ENCODE measurements at regions of chr4 and their contacts with region 1.

Region 1: GRCh38 chr4:138348055-138348454 is 105.9 kb upstream of the SLC7A11 start:
- DNase-seq: peak; percentile 47
- H3K4me3 Mint-ChIP-seq: peak overlapping the region; percentile 41
- H3K27ac Mint-ChIP-seq: peak overlapping the region; percentile 96
- H3K4me1 Mint-ChIP-seq: peaks cover 43% of the 10 kb centered on the region
- H3K27me3 Mint-ChIP-seq: no peaks in the 10 kb centered on the region
- CTCF ChIP-seq: no peak

Region 2: DNA sequence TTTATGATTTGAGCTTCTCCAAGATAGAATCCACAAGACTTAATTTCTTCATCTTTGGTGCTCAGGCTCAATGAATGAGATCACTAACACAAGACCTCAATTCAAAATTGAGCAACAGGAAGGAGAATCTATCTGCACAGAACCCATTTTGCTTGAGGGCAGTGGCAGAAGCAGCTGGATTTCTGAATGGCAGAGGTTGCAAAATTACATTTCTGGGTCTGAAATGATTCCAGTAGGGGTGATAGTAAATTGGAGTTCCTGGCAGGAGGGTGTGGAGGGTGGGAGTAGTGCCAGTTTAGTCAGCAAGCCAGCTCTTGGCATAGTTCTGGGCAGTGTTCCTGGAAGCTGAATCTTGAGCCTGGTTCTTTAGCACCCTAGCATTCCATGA is 387.0 kb before region 1 on chr4:
- CTCF ChIA-PET with region 1: no interaction called
- intact Hi-C with region 1: no loop called
- DNase-seq: no peak
- H3K4me3 Mint-ChIP-seq: no peak overlapping the region
- H3K27ac Mint-ChIP-seq: no peak overlapping the region
- H3K4me1 Mint-ChIP-seq: no peaks in the 10 kb centered on the region
- H3K27me3 Mint-ChIP-seq: no peaks in the 10 kb centered on the region
- CTCF ChIP-seq: no peak

Region 3: GRCh38 chr4:138199568-138200235 is 148.4 kb before region 1 on chr4:
- CTCF ChIA-PET with region 1: no interaction called
- intact Hi-C with region 1: loop called (anchors 5 kb)
- DNase-seq: peak; percentile 67
- H3K4me3 Mint-ChIP-seq: peak overlapping the region; percentile 57
- H3K27ac Mint-ChIP-seq: peak overlapping the region; percentile 98
- H3K4me1 Mint-ChIP-seq: peaks cover 49% of the 10 kb centered on the region
- H3K27me3 Mint-ChIP-seq: no peaks in the 10 kb centered on the region
- CTCF ChIP-seq: no peak

Region 4: DNA sequence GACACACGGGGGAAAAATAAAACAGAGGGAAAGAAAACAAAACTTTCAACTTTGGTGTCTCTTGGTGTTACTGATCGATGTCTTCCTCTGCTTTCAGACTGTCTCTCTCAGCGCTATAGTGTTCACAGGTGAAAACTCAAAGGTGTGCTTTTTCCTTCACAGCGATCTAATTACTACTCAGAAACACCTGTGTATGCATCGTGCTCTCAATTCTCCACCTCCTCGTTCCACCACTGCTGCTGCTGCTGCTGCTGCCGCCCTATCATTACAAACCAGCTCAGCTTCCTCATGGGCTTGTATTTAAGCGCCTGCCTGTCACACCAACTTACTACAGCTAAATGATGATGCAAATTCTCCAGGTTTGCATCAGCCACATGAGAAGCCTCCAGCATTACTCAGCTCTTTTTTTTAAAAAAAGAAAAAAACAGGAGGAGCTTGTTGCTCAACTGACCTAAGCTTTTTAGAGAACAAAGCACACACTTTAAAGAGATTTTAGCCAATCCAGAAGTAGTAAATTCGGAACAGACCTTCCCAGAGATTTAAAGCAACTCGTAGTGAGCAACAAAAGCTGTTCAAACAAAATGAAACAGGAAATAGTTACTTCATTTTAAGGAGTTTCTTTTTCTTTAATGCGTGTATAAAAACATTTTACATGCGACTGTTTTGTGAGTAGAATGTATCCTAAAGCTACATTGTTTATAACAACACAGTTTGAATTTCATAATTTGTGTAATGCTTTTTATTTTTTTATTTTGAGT is 105.8 kb before region 1 on chr4 and contains the start of gene SLC7A11:
- CTCF ChIA-PET with region 1: interaction called, 4 read pairs
- intact Hi-C with region 1: loop called (anchors 1 kb)
- DNase-seq: peak; percentile 79
- H3K4me3 Mint-ChIP-seq: peak within 1 kb of the TSS; percentile 97
- H3K27ac Mint-ChIP-seq: peak within 1 kb of the TSS; percentile 99
- H3K4me1 Mint-ChIP-seq: no peaks in the 10 kb centered on the region
- H3K27me3 Mint-ChIP-seq: no peaks in the 10 kb centered on the region
- CTCF ChIP-seq: no peak
- total RNA-seq, gene SLC7A11: 37.7 and 49.4 TPM in 2 replicates

Region 5: DNA sequence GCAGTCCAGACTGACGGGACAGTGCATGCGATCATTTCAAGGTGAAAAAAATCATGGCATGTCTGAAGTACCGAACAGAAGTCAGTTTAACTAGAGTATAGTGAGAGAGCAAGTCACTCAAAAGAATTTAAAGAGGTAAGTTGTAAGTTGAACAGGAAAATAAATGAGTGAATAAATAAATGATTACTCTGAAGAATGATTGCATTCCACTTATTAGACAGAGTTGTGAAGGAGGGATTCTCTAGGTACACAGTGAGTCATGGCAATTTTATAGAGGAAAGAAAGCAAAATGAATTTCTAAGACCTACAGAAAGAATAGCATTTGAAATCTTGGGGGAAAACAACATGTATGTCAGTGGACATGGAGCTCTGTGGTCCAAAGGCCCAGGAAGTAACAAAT is 68.8 kb before region 1 on chr4:
- CTCF ChIA-PET with region 1: no interaction called
- intact Hi-C with region 1: no loop called
- DNase-seq: no peak
- H3K4me3 Mint-ChIP-seq: no peak overlapping the region
- H3K27ac Mint-ChIP-seq: no peak overlapping the region
- H3K4me1 Mint-ChIP-seq: no peaks in the 10 kb centered on the region
- H3K27me3 Mint-ChIP-seq: no peaks in the 10 kb centered on the region
- CTCF ChIP-seq: no peak

Region 6: DNA sequence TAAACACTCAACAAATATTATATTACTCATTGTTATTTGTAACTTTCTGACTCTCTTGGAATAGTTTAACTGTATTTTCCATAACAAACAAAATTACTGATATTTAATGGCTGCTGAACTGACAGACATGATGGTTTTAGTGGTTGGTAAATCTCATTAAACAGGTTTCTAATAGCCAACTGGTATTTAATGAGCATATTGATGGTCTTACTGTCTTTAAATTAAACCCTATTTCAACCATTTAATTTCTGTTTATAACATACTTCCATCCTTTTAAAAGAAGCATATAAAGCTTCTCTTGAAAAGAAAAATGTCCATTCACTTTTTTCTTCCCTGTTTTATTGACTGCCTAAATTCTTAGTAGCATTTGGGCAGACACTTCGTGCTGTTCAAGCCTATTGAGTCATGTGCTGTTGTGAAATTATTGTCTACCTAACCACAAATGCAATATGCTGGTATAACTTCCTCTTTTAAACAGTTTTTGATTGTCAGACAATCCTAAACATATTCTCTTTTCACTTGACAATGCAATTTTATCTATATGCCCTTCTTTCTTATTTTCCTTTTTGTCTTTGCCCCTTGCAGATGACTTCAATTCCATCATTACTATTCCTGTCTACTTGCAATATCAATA is 58.0 kb after region 1 on chr4:
- CTCF ChIA-PET with region 1: no interaction called
- intact Hi-C with region 1: loop called (anchors 5 kb)
- DNase-seq: no peak
- H3K4me3 Mint-ChIP-seq: no peak overlapping the region
- H3K27ac Mint-ChIP-seq: peak overlapping the region; percentile 68
- H3K4me1 Mint-ChIP-seq: peaks cover 21% of the 10 kb centered on the region
- H3K27me3 Mint-ChIP-seq: no peaks in the 10 kb centered on the region
- CTCF ChIP-seq: no peak

Region 7: DNA sequence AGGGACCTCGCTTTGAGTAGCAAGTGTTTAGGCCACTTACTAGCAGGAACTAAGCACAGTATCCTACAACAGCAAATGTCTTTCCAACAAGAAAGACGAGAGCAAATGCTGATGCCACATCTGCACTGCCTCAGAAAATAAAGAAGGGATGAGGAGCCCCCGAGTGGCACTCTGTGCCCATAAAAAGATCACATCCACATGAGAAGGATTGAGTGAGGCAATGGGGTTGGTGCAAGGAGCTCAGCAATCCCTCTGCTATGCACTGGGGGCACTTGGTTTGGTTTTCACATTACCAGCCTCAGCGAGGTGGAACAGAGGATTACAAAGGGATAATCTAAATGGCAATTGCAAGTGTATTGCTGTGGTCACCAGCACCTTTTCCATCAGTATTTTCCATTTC is 146.9 kb after region 1 on chr4:
- CTCF ChIA-PET with region 1: interaction called, 7 read pairs
- intact Hi-C with region 1: loop called (anchors 2 kb)
- DNase-seq: peak; percentile 71
- H3K4me3 Mint-ChIP-seq: no peak overlapping the region
- H3K27ac Mint-ChIP-seq: no peak overlapping the region
- H3K4me1 Mint-ChIP-seq: peaks cover 18% of the 10 kb centered on the region
- H3K27me3 Mint-ChIP-seq: no peaks in the 10 kb centered on the region
- CTCF ChIP-seq: peak; percentile 23